Heart right ventricle (tissue), 16 donors: ENCODE measurements at regions of chr6 and their contacts with region 1.

Region 1: DNA sequence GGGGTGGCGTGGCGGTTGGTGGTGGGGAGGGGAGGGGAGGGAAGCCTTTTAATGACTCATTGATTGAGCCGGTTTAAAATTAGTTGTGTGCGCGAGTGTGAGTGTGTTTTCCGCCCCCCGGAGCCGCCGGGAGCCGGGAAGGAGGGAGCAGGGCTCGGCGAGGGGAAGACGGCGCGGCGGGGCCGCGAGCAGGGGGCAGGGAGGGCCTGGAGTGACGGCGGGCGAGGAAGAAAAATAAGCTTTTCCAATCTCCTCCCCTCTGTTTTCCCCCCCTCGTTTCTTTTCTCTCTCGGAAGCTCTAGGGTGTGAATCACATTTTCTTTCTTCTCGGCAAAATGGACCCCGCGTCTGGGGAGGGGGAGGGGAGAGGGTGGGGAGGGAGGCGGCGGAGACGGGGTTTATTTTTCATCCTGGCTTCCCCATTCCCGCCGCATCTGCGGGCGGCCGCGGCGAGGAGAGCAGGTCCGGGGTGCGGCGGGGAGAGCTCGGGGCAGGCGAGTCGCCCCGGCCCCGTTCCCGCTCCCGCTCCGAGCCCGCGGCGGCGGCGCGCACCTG is 847 bp downstream of the BICRAL start:
- DNase-seq: peak; percentile 81 to 85
- ATAC-seq: peak; percentile 70 to 85 (median 81)
- H3K4me3 ChIP-seq: peak overlapping the region; percentile 61 to 100 (median 90)
- H3K27ac ChIP-seq: peak overlapping the region; percentile 99 to 100 (median 100)
- H3K4me1 ChIP-seq: peaks cover 3 to 42% (median 39%) of the 10 kb centered on the region in 9 donors
- H3K27me3 ChIP-seq: no peaks in the 10 kb centered on the region
- CTCF ChIP-seq: no peak

Region 2: DNA sequence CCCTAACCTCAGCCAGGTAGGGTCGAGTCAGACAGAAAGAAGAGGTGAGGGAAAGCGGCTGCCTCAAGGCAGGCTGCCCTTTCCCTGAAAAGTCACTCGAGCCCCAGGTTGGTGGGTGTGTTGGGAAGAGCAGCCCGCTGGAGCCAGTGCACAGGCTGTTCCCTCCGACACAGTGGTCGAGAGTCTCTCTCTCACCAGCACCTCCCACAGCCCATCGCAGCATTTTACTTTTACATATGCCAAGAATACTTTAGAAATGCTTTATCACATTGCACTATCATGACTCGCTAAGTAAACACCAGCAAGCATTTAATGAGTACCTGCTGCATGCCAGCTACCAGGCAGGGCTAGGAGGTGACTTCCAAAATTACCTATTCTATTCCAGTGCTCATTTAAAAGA is 62.0 kb before region 1 on chr6:
- intact Hi-C with region 1: no loop called
- DNase-seq: no peak
- ATAC-seq: no peak
- H3K4me3 ChIP-seq: no peak overlapping the region
- H3K27ac ChIP-seq: no peak overlapping the region
- H3K4me1 ChIP-seq: peaks cover 0 to 2% (median under 1%) of the 10 kb centered on the region in 9 donors
- H3K27me3 ChIP-seq: no peaks in the 10 kb centered on the region
- CTCF ChIP-seq: no peak

Region 3: GRCh38 chr6:42766141-42766670 is 16.5 kb before region 1 on chr6:
- intact Hi-C with region 1: no loop called
- DNase-seq: no peak
- ATAC-seq: no peak
- H3K4me3 ChIP-seq: no peak overlapping the region
- H3K27ac ChIP-seq: no peak overlapping the region
- H3K4me1 ChIP-seq: peaks cover 0 to 20% (median 8%) of the 10 kb centered on the region in 9 donors
- H3K27me3 ChIP-seq: no peaks in the 10 kb centered on the region
- CTCF ChIP-seq: no peak

Region 4: GRCh38 chr6:42819803-42820511 is 37.3 kb after region 1 on chr6:
- intact Hi-C with region 1: loop called in 3 of 10 experiments (anchors 5 kb)
- DNase-seq: no peak
- ATAC-seq: peak in 4 of 8 donors; percentile 13 to 56 (median 48)
- H3K4me3 ChIP-seq: no peak overlapping the region
- H3K27ac ChIP-seq: peak overlapping the region in 8 of 10 donors; percentile 28 to 77 (median 61)
- H3K4me1 ChIP-seq: peaks cover 0 to 37% (median 26%) of the 10 kb centered on the region in 9 donors
- H3K27me3 ChIP-seq: no peaks in the 10 kb centered on the region
- CTCF ChIP-seq: peak in 4 of 9 donors; percentile 4 to 25 (median 16)

Region 5: DNA sequence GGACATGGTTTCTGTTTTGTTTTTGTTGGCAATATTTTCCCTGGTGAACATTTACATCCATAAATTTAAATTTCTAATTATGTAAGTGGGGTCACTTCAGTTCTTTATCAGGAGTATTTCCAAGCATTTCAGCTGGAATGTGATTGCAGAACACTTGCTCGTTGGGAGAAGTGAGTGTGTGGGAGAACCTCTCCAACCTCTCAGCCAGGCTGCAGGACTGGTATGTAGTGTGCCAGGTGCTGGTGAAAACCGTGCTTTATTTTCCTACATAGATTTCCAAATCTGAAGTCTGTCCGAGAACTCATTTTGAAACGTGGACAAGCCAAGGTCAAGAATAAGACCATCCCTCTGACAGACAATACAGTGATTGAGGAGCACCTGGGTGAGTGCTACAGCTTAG is 103.0 kb after region 1 on chr6:
- intact Hi-C with region 1: no loop called
- DNase-seq: no peak
- ATAC-seq: no peak
- H3K4me3 ChIP-seq: no peak overlapping the region
- H3K27ac ChIP-seq: no peak overlapping the region
- H3K4me1 ChIP-seq: peaks cover 8 to 33% (median 24%) of the 10 kb centered on the region in 9 donors
- H3K27me3 ChIP-seq: no peaks in the 10 kb centered on the region
- CTCF ChIP-seq: no peak

Region 6: DNA sequence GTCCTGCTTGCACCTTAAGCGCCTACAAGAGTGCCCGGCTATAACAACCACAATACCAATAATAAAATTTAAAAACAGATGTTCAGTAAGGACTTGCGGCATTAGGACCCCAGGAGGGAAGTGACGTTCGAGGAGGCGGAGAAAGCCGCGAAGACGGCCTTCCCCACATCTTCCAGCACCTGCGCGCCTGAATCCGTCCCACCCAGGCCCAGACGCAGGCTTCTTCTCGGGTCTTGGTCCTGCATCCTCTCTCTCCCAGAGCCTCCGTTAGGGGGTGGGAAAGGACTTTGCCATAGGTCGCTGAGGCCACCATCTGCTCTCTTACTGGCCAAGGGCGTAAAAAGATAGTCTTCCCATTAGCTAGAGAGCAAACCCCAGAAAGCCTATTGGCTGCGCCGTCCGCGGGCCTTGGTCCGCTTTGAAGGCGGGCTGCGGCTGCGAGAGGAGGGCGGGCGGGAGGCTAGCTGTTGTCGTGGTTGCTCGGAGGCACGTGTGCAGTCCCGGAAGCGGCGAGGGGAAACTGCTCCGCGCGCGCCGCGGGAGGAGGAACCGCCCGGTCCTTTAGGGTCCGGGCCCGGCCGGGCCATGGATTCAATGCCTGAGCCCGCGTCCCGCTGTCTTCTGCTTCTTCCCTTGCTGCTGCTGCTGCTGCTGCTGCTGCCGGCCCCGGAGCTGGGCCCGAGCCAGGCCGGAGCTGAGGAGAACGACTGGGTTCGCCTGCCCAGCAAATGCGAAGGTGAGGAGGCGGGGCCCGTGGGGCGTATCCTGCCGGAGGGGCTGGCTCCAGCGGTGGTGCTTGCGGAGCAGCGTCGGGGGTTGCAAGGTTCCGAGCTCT is 146.5 kb after region 1 on chr6 and contains the start of gene CNPY3:
- intact Hi-C with region 1: no loop called
- DNase-seq: peak; percentile 91 to 93
- ATAC-seq: peak; percentile 95 to 97 (median 96)
- H3K4me3 ChIP-seq: peak within 1 kb of the TSS; percentile 48 to 89 (median 78)
- H3K27ac ChIP-seq: peak within 1 kb of the TSS; percentile 74 to 96 (median 93)
- H3K4me1 ChIP-seq: peaks cover 0 to 54% (median 18%) of the 10 kb centered on the region in 9 donors
- H3K27me3 ChIP-seq: peaks cover 0 to 7% (median 0%) of the 10 kb centered on the region in 7 donors
- CTCF ChIP-seq: peak in 2 of 9 donors; percentile 13 to 18
- total RNA-seq, gene CNPY3: 10.4 to 37.1 (median 15.9) TPM